K562 (cell line): ENCODE measurements at regions of chr11 and their contacts with region 1.

Region 1: DNA sequence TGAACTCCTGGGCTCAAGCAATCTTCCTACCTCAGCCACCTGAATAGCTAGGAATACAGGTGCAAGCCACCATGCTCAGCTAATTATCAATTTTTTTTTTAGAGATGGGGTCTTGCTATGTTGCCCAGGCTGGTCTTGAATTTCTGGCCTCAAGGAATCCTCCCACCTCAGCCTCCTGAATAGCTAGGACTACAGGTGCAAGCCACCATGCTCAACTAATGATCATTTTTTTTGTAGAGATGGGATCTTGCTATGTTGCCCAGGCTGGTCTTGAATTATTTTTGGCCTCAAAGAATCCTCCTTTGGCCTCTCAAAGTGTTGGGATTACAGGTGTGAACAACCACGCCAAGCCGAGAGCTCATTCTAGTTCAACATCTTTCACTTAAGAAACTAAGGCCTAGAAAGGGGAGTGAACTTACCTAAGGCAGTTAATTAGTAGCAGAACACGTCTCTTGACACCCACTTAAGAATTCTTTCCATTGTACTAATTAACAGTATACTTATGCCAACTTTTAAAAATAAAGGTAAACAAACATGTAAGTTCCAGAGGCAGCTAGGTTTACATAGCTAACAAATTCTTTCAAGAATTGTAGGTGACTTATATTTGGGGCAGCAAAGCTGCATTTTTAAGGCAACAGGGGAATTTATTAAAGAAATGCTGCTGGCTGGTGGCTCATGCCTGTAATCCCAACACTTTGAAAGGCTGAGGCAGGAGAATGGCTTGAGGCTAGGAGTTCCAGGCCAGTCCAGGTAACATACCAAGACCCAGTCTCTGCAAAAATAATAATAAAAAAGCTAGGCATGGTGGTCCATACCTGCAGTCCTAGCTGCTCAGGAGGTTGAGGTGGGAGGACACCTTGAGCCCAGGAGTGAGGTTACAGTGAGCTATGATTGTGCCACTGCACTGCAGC is 9.6 kb downstream of the ZBED5 start:
- DNase-seq: no peak
- ATAC-seq: no peak
- H3K4me3 ChIP-seq: no peak overlapping the region
- H3K27ac ChIP-seq: no peak overlapping the region
- H3K4me1 ChIP-seq: no peaks in the 10 kb centered on the region
- H3K27me3 ChIP-seq: no peaks in the 10 kb centered on the region
- CTCF ChIP-seq: no peak
- EP300 ChIP-seq: no peak
- POLR2A ChIP-seq: no peak
- RAD21 ChIP-seq: no peak

Region 2: GRCh38 chr11:10735481-10736475 is 112.4 kb before region 1 on chr11:
- CTCF ChIA-PET with region 1: no interaction called
- POLR2A ChIA-PET with region 1: no interaction called
- in situ Hi-C with region 1: no loop called
- intact Hi-C with region 1: no loop called
- DNase-seq: peak; percentile 95 to 98 (median 96)
- ATAC-seq: peak; percentile 100
- H3K4me3 ChIP-seq: peak overlapping the region; percentile 27; the same call in 1 of the 2 replicates
- H3K27ac ChIP-seq: peak overlapping the region; percentile 76; the same call in 2 of the 3 replicates
- H3K4me1 ChIP-seq: peaks cover 7% of the 10 kb centered on the region in 2 experiments; a peak in 4 of 5 replicates
- H3K27me3 ChIP-seq: no peaks in the 10 kb centered on the region
- CTCF ChIP-seq: peak; percentile 97 to 98 (median 98)
- EP300 ChIP-seq: peak; percentile 28; the same call in 1 of the 2 replicates
- POLR2A ChIP-seq: no peak
- RAD21 ChIP-seq: peak; percentile 99 to 100

Region 3: GRCh38 chr11:10838083-10838482 is 10.1 kb before region 1 on chr11:
- CTCF ChIA-PET with region 1: no interaction called
- POLR2A ChIA-PET with region 1: interaction called, 15 read pairs
- in situ Hi-C with region 1: no loop called
- intact Hi-C with region 1: no loop called
- DNase-seq: no peak
- ATAC-seq: peak; percentile 42
- H3K4me3 ChIP-seq: no peak overlapping the region
- H3K27ac ChIP-seq: no peak overlapping the region
- H3K4me1 ChIP-seq: peaks cover 3 to 8% of the 10 kb centered on the region in 2 experiments; a peak in 4 of 5 replicates
- H3K27me3 ChIP-seq: no peaks in the 10 kb centered on the region
- CTCF ChIP-seq: no peak
- EP300 ChIP-seq: no peak
- POLR2A ChIP-seq: no peak
- RAD21 ChIP-seq: no peak

Region 4: DNA sequence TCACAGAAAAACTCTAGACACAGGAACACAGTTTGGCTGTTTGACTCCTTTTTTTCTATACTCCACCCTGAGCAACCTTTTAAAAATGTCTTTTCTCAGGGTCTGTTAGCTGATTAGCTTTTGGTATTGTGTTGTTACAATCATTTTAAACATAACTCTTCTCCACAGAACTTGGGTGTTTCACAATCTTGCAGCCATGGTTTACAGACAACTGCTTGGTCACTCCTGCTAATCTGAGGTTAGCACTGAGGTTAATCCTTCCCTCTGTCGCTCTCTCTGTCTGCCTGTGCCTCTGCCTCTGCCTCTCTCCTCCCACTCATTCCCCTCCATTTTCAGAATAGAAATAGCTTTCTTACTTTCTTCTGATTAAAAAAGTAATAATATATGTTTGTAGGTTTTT is 72.0 kb after region 1 on chr11:
- CTCF ChIA-PET with region 1: no interaction called
- POLR2A ChIA-PET with region 1: no interaction called
- in situ Hi-C with region 1: no loop called
- intact Hi-C with region 1: no loop called
- DNase-seq: peak; percentile 52 to 91 (median 72)
- ATAC-seq: peak; percentile 99
- H3K4me3 ChIP-seq: no peak overlapping the region
- H3K27ac ChIP-seq: peak overlapping the region; percentile 93
- H3K4me1 ChIP-seq: peaks cover 0 to 20% of the 10 kb centered on the region in 2 experiments; a peak in 3 of 5 replicates
- H3K27me3 ChIP-seq: no peaks in the 10 kb centered on the region
- CTCF ChIP-seq: no peak
- EP300 ChIP-seq: peak; percentile 82; the same call in 1 of the 2 replicates
- POLR2A ChIP-seq: no peak; the same call in 1 of the 2 replicates
- RAD21 ChIP-seq: peak in 1 of 2 experiments; percentile 8; a peak in 1 of 4 replicates